WTC11 (cell line): ENCODE measurements at regions of chr16 and their contacts with region 1.

Region 1: DNA sequence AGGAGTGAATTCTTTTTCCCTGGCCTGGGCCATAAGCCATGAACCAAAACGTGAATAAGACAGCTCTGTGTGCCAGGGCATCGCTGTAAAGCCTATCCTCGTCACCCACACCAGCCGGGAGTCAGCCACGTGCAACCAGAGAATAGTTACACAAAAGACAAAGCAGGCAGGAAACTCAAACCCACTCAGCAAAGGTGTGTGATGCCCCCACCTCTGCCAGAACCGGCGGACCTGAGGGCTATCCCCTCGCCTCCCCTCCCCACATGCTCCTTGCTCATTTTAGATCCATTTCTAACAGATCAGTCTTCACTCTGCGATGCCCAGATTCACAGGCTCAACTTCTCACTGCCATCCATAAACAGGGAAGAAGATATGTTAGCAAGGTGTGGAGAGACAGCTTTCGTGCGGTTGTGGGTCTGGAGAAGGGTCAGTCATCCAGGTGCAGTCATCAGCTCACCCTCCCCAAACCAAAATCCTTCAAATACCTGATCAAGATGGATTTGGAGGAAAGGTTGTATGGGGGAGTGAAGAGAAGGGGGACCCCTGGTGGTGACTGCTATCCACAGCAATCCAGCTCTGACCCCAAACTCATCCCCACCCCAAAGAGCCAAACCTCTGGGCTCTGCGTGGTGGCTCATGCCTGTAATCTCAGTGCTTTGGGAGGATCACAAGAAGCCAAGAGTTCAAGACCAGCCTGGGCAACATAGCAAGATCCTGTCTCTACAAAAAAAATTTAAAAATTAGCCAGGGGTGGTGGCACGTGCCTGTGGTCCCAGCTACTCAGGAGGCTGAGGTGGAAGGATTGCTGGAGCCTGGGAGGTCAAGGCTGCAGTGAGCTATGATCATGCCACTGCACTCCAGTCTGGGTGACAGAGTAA is 219.2 kb downstream of the C16orf78 start:
- DNase-seq: peak; percentile 72
- ATAC-seq: peak; percentile 79
- H3K4me3 Mint-ChIP-seq: no peak overlapping the region
- H3K27ac Mint-ChIP-seq: peak overlapping the region; percentile 57; the same call in 1 of the 2 replicates
- H3K4me1 Mint-ChIP-seq: peaks cover 55% of the 10 kb centered on the region
- H3K27me3 Mint-ChIP-seq: no peaks in the 10 kb centered on the region; the same call in 1 of the 2 replicates
- CTCF ChIP-seq: peak; percentile 76

Region 2: GRCh38 chr16:49407873-49408550 is 184.8 kb before region 1 on chr16:
- CTCF ChIA-PET with region 1: interaction called, 33 read pairs
- POLR2A ChIA-PET with region 1: interaction called, 3 read pairs
- DNase-seq: peak; percentile 93
- ATAC-seq: peak; percentile 100
- H3K4me3 Mint-ChIP-seq: no peak overlapping the region
- H3K27ac Mint-ChIP-seq: no peak overlapping the region
- H3K4me1 Mint-ChIP-seq: peaks cover 3% of the 10 kb centered on the region
- H3K27me3 Mint-ChIP-seq: peaks cover 2% of the 10 kb centered on the region; the same call in 1 of the 2 replicates
- CTCF ChIP-seq: peak; percentile 81

Region 3: DNA sequence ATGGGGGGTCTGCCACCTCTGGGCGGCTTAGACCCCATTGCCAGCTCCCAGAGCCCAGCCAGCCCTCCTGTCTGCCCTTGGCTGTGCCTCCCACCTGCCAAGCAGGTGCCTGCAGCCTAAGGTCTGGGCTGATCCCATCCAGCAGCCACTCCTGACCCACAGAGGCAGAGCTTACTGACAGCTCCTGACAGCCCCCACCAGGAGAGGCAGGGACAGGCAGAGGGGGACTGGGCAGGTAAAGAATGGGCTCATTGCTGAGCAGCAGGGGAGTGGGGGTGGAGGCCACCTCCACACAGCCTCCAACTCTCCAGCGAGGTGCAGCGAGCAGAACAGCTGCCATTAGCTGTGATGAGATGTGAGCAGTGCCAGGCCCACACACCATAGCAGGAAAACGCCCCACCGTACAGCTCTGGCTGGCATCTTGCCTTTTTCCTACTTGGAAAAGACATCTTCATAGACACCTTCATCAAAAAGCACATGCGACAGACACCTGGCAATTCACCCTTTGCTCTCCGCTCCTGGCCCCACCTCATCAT is 54.8 kb before region 1 on chr16:
- CTCF ChIA-PET with region 1: interaction called, 16 read pairs
- POLR2A ChIA-PET with region 1: no interaction called
- DNase-seq: no peak
- ATAC-seq: peak; percentile 64
- H3K4me3 Mint-ChIP-seq: no peak overlapping the region
- H3K27ac Mint-ChIP-seq: no peak overlapping the region
- H3K4me1 Mint-ChIP-seq: peaks cover 18% of the 10 kb centered on the region
- H3K27me3 Mint-ChIP-seq: no peaks in the 10 kb centered on the region
- CTCF ChIP-seq: no peak

Region 4: DNA sequence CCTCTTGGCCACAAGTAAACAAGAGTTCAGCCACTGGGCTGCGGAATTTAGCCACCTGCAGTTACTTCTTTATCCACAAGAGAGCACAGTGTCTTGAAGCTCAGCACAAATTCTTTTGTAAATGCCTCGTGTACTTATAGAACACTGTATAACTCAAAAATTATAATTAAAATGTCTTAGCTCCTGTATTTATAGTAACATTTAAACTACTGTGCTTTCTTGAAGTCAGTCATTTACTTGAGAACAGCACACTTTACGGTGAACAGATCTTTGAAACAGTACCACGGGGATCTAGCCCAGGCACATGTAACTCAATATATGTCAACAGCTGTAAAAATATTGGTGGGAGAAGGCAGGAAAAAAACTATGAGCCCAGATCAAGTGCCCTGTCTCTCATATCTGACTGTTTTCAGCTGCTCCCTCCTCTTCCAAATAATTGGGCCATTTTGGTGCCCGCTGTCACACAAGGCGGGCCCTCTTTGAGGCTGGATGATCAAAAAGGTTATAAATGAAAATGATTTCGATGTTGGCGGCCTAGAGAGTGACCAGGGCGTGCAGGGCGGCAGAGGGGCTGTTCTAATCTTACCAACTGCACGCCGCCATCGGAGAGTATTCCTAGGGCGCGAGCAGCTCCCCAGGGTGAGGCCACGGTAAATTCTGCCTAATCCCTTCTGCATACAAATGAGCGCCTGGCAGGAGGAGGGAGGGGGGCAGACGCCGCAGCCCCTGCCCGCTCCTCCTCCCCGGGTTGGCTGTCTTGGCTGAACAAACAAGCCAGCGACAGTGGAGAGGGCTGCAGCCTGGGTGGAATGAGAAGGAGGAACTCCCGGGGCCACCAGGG is 36.0 kb before region 1 on chr16:
- CTCF ChIA-PET with region 1: interaction called, 100 read pairs
- POLR2A ChIA-PET with region 1: no interaction called
- DNase-seq: peak; percentile 68
- ATAC-seq: peak; percentile 91
- H3K4me3 Mint-ChIP-seq: no peak overlapping the region; the same call in 1 of the 2 replicates
- H3K27ac Mint-ChIP-seq: peak overlapping the region; percentile 87
- H3K4me1 Mint-ChIP-seq: no peaks in the 10 kb centered on the region
- H3K27me3 Mint-ChIP-seq: no peaks in the 10 kb centered on the region
- CTCF ChIP-seq: peak; percentile 53

Region 5: DNA sequence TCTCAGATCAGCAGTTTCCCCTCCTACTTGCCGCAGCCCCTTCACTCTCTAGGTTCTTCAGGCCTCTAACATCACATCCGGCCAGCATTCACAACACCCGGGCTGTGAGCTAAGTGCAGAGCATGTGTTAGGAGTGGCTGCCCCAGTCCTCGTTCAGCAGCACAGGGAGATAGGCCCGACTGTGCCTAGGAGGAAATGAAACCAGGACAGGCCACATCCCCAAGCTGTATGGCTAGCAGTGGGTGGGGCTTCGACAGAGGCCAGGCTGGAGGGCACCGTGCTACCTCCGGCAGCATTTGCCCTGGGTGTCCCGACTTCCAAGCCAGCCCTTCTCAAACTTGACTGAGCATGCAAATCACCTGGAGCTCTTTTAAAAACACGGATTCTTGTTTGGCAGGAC is 17.4 kb before region 1 on chr16:
- CTCF ChIA-PET with region 1: interaction called, 15 read pairs
- POLR2A ChIA-PET with region 1: no interaction called
- DNase-seq: peak; percentile 35
- ATAC-seq: peak; percentile 94
- H3K4me3 Mint-ChIP-seq: no peak overlapping the region
- H3K27ac Mint-ChIP-seq: peak overlapping the region; percentile 34
- H3K4me1 Mint-ChIP-seq: peaks cover 24% of the 10 kb centered on the region
- H3K27me3 Mint-ChIP-seq: no peaks in the 10 kb centered on the region
- CTCF ChIP-seq: no peak

Region 6: GRCh38 chr16:49608779-49609178 is 16.0 kb after region 1 on chr16:
- CTCF ChIA-PET with region 1: interaction called, 27 read pairs
- POLR2A ChIA-PET with region 1: no interaction called
- DNase-seq: no peak
- ATAC-seq: peak; percentile 84
- H3K4me3 Mint-ChIP-seq: no peak overlapping the region
- H3K27ac Mint-ChIP-seq: no peak overlapping the region
- H3K4me1 Mint-ChIP-seq: peaks cover 20% of the 10 kb centered on the region
- H3K27me3 Mint-ChIP-seq: no peaks in the 10 kb centered on the region
- CTCF ChIP-seq: no peak

Region 7: GRCh38 chr16:49795513-49795912 is 202.7 kb after region 1 on chr16:
- CTCF ChIA-PET with region 1: no interaction called
- POLR2A ChIA-PET with region 1: no interaction called
- DNase-seq: no peak
- ATAC-seq: peak; percentile 24; the same call in 1 of the 2 replicates
- H3K4me3 Mint-ChIP-seq: no peak overlapping the region
- H3K27ac Mint-ChIP-seq: peak overlapping the region; percentile 23; the same call in 1 of the 2 replicates
- H3K4me1 Mint-ChIP-seq: peaks cover 53% of the 10 kb centered on the region
- H3K27me3 Mint-ChIP-seq: no peaks in the 10 kb centered on the region
- CTCF ChIP-seq: no peak